ENCODE measurements at regions of chr17 and their contacts with region 1.

Region 1: DNA sequence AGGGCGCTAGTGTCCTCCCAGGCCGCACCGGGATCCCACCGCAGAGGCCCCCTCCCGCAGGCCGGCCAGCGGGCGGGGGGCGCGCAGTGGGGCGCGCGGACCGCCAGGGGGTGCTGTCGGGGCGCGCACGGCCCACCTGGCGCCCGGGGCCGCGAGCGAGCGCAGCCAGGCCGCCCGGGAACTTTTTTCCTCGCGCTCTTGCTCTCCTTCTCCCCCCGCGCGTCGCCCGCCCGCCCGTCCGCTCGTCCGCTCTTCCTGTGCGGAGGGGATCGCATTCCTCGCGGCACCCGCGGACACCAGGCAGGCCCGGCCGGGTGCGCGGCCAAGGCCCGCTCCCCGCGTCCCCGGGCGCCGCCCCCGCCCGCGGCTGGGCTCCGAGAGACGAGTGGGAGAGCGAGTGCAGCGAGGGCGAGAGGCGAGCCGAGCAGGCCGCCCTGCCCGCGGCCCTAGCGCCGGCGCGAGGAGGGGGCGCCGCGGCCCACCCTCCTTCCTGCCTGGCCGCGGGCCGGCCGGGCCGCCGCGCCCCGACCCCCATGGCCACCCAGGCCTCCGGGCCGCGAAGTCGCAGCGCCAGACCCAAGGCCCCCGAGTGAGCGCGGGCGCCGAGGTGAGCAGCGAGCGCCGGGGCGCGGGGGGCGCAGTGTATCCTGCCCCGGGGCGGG is at the start of gene RAI1:
- DNase-seq: peak; percentile 95
- H3K4me3 ChIP-seq: peak within 1 kb of the TSS; percentile 81 to 85
- H3K27ac ChIP-seq: peak within 1 kb of the TSS; percentile 94 to 96
- H3K4me1 ChIP-seq: peaks cover 23 to 29% of the 10 kb centered on the region in 2 experiments
- H3K27me3 ChIP-seq: no peaks in the 10 kb centered on the region
- CTCF ChIP-seq: peak; percentile 59
- EP300 ChIP-seq: no peak
- RAD21 ChIP-seq: peak; percentile 75
- polyA plus RNA-seq, gene RAI1: 2.6 and 4.7 TPM in 2 replicates

Region 2: DNA sequence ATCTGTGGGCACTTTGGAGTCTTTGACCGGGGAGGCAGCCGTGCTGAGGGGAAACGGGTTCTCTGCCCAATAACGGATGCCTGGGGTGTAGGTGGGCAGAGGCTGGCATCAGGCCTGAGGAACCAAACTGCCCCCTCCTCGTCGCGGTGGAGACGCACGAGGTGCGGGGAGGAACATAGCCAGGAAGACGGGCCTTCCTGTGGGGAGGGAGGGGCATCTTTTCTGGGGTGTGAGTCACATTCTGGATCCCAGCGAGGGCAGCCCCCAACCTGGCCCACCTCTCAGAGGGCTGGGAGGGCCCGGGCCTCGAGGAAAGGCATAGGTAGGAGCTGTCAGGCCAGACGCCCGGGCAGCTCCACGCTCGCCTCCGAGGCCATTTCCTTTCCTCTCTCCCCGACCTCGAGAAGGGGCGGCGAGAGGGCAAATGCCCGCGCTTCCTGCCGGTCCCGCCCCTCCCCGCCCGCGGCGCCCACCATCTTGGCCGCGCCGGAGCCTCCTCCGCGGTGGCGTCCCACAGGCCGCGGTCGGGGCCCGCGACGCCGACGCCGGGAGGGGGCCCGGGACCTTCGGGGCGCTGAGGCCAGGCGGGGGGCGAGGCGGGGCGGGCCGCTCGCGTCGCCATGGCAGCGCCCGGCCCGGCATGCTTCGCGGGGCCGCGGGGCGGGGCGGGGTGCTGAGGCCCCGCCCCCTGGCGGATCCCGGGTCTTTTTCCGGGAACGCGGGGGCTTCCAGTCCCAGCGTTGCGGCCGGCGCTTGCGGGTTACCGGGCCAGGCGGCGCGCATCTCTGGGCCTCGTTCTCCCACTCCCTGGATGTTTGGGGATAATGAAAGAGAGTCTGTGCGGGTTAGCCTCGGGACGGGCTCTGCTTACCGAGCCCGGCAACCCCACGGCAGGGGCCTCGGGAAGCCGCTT is 13.1 kb after region 1 on chr17:
- CTCF ChIA-PET with region 1: interaction called, 35 read pairs
- POLR2A ChIA-PET with region 1: interaction called, 6 read pairs
- DNase-seq: peak; percentile 95
- H3K4me3 ChIP-seq: peak overlapping the region; percentile 68 to 79
- H3K27ac ChIP-seq: peak overlapping the region; percentile 95 to 99
- H3K4me1 ChIP-seq: peaks cover 65 to 85% of the 10 kb centered on the region in 2 experiments
- H3K27me3 ChIP-seq: no peaks in the 10 kb centered on the region
- CTCF ChIP-seq: no peak
- EP300 ChIP-seq: no peak
- RAD21 ChIP-seq: no peak

Region 3: DNA sequence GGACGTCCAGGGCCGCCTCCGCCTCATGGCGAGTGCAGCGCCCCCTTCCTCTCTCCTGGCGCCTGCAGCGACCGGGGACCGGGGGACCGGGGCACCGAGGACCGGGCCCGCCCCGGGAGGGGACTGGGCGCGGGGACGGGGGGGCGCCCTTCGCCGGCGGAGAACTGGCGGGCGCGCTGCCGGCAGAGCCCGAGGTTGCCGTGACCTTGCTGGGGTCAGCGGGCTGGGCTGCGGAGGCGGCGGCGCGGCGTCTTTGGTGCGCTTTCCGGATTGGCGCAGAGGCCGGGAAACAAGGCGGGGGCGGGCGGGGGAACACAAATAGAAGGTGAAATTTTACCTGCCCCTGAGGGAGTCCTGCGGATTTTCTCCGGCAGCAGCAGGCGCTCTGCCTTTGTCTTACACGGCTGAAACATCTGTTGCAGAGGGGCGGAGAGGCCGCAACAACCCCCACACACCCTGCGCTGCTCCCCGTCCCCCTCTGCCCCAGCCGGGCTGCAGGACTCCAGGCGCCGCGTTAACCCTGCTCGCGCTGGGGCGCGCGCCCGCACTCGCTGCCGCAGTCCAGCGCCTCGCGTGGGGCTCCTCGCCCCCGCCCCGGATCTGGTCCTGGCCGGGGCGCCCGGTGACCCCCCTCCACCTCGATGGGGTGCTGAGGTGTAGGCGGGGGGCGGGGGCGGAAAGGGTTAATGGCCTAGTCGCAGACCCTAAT is 102.0 kb after region 1 on chr17:
- CTCF ChIA-PET with region 1: interaction called, 21 read pairs
- POLR2A ChIA-PET with region 1: no interaction called
- DNase-seq: peak; percentile 76
- H3K4me3 ChIP-seq: peak overlapping the region; percentile 35 to 52; a peak in 3 of 4 replicates
- H3K27ac ChIP-seq: peak overlapping the region in 1 of 2 experiments; percentile 95; a peak in 2 of 4 replicates
- H3K4me1 ChIP-seq: peaks cover 22 to 77% of the 10 kb centered on the region in 2 experiments
- H3K27me3 ChIP-seq: no peaks in the 10 kb centered on the region
- CTCF ChIP-seq: peak; percentile 35
- EP300 ChIP-seq: no peak
- RAD21 ChIP-seq: no peak

Region 4: DNA sequence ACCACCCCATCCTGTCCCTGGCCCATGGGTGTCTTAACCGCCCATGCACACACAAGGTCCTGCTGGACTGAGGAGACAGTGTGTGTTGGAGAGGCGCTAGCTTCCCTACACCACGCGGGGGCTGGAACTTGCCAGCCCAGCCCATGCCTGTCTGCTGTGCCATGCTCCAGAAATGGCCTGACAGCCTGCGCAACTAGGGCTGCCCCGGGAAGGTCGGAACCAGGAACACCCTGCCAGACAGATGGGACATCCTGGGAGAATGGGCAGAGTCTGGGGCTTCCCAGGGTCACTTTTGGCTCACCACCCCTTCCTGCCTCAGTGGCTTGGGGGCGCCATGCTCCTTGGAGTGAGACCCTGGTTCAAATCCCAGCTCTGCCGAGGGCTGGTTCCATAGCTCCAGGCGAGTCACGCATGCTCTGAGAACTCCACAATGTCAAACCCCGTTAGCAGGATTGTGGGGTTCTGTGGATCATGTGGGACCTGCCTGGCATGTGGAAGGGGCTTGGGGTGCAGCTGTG is 119.2 kb after region 1 on chr17:
- CTCF ChIA-PET with region 1: interaction called, 12 read pairs
- POLR2A ChIA-PET with region 1: no interaction called
- DNase-seq: no peak
- H3K4me3 ChIP-seq: no peak overlapping the region
- H3K27ac ChIP-seq: no peak overlapping the region; a peak in 1 of 4 replicates
- H3K4me1 ChIP-seq: peaks cover 0 to 8% of the 10 kb centered on the region in 2 experiments; a peak in 1 of 4 replicates
- H3K27me3 ChIP-seq: no peaks in the 10 kb centered on the region
- CTCF ChIP-seq: no peak
- EP300 ChIP-seq: no peak
- RAD21 ChIP-seq: no peak

Region 5: DNA sequence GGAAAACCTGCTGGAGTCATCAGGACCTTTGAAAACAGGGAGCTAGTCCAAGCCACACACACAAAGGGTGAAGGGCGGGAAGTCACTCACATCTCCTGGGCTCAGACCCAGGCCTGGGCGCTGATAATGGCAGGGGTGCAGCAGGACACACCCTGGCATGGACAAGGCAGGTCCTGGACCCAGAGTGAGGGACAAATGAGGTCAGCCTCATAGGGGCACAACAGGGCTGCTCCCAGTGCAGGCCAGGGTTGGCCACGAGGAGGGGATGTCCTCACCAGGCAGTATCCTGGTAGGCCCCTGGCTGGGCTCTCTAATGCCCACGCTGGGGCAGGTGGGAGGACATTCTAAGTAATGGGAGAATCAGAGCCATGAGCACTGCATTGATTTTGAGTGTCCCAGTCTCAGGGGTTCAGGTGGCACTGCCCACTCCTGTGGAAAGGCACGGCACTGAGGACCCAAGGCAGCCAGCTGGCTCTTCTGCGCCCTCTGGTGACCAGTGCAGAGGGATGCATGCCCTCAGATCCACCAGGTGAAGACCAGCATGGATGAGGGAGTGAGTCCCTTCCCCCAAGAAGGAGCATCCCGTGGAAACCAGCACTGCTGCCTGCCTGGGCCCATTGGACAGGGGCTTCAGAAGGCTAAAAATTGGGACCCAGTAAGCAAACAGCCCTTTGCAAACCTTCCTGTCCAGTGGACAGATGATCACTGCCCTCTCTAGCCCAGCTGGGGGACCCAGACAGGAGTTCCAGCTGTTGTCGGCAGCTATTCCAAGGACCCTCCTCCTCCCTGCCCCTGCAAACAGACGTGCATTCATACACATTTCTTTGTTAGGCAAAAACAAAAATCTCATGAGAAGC is 178.8 kb after region 1 on chr17:
- CTCF ChIA-PET with region 1: interaction called, 66 read pairs
- POLR2A ChIA-PET with region 1: interaction called, 3 read pairs
- DNase-seq: peak; percentile 84
- H3K4me3 ChIP-seq: no peak overlapping the region; a peak in 1 of 4 replicates
- H3K27ac ChIP-seq: no peak overlapping the region; a peak in 1 of 4 replicates
- H3K4me1 ChIP-seq: peaks cover 0 to 47% of the 10 kb centered on the region in 2 experiments; a peak in 1 of 4 replicates
- H3K27me3 ChIP-seq: no peaks in the 10 kb centered on the region
- CTCF ChIP-seq: peak; percentile 92
- EP300 ChIP-seq: no peak
- RAD21 ChIP-seq: peak; percentile 95

Measured in SK-N-SH (cell line).